ENCODE measurements at regions of chr18 and their contacts with region 1.

Region 1: GRCh38 chr18:2958819-2959298 is 54.1 kb downstream of the LPIN2 start:
- DNase-seq: no peak
- H3K4me3 Mint-ChIP-seq: peak overlapping the region; percentile 40
- H3K27ac Mint-ChIP-seq: peak overlapping the region; percentile 99
- H3K4me1 Mint-ChIP-seq: peaks cover 84% of the 10 kb centered on the region
- H3K27me3 Mint-ChIP-seq: no peaks in the 10 kb centered on the region

Region 2: DNA sequence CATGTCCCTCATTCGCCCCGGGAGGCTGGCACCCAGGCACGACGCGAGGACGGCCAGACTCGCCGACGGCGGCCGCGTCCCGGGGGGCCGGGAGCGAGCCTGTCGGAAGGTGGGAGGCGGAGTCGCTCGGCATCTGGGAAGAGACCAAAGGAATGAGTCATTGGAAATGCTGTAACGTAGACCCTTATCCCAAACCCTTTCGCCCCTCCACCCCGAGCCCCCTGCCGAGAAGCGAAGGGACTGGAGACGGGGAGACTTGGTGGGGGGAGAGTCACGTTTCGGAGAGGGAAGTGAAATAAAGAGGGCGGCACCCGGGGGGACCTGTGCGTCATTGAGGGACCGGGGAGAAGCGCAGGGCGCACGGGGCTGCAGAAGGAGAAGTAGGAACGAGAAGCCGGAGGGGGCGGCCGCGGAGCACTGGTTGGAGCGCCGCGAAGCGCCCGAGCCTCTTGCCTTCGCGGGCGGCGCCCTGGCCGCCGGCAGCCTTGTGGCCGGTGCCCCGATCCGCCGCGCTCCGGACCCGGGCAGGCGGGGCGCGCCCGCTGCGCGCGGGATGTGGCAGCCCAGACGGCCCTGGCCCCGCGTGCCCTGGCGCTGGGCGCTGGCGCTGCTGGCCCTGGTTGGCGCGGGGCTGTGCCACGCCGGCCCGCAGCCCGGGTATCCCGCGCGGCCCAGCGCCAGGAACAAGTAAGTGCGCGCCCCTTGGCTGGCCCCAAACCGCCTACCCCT is 112.1 kb before region 1 on chr18 and contains the start of gene EMILIN2:
- intact Hi-C with region 1: no loop called
- DNase-seq: peak; percentile 49
- H3K4me3 Mint-ChIP-seq: peak within 1 kb of the TSS; percentile 93
- H3K27ac Mint-ChIP-seq: peak within 1 kb of the TSS; percentile 95
- H3K4me1 Mint-ChIP-seq: peaks cover 36% of the 10 kb centered on the region
- H3K27me3 Mint-ChIP-seq: peaks cover 14% of the 10 kb centered on the region
- total RNA-seq, gene EMILIN2: 53.4 and 53.5 TPM in 2 replicates

Region 3: GRCh38 chr18:2932247-2933181 is 26.3 kb before region 1 on chr18:
- intact Hi-C with region 1: loop called (anchors 2 kb)
- DNase-seq: no peak
- H3K4me3 Mint-ChIP-seq: peak overlapping the region; percentile 43
- H3K27ac Mint-ChIP-seq: peak overlapping the region; percentile 89
- H3K4me1 Mint-ChIP-seq: peaks cover 32% of the 10 kb centered on the region
- H3K27me3 Mint-ChIP-seq: no peaks in the 10 kb centered on the region

Region 4: GRCh38 chr18:2948038-2948437 is 10.8 kb before region 1 on chr18:
- intact Hi-C with region 1: loop called (anchors 2 kb)
- DNase-seq: no peak
- H3K4me3 Mint-ChIP-seq: no peak overlapping the region
- H3K27ac Mint-ChIP-seq: no peak overlapping the region
- H3K4me1 Mint-ChIP-seq: peaks cover 44% of the 10 kb centered on the region
- H3K27me3 Mint-ChIP-seq: no peaks in the 10 kb centered on the region

Region 5: DNA sequence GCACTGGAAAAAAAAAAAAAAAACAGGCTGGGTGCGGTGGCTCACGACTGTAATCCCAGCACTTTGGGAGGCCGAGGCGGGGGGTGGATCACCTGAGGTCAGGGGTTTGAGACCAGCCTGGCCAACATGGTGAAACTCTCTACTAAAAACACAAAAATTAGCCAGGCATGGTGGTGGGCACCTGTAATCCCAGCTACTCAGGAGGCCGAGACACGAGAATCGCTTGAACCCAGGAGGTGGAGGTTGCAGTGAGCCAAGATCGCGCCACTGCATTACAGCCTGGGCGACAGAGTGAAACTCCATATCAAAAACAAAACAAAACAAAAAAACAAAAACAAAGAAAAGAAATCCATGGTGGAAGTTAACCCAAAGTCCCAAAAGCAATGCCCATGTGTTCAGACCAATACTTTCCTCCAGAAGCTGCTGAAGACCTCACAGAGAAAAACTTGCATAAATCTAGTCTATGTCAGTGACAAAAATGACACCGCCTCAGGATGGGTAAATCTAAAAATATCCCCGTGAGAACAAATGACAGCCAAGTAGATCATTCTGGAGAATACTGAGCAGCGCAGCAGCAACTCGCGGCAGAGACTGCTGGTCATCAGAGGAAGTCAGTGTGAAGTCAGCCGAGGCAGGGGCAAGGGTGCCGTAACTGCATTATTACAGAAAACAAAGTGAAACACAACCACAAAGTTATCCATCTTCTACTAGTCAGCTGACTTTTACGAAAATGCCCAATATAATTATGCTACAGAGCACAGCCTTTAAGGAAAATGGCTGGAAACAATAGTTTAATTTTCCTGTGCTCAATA is 13.1 kb after region 1 on chr18:
- intact Hi-C with region 1: loop called (anchors 1 kb)
- DNase-seq: peak; percentile 67
- H3K4me3 Mint-ChIP-seq: peak overlapping the region; percentile 89
- H3K27ac Mint-ChIP-seq: peak overlapping the region; percentile 98
- H3K4me1 Mint-ChIP-seq: peaks cover 81% of the 10 kb centered on the region
- H3K27me3 Mint-ChIP-seq: no peaks in the 10 kb centered on the region

Region 6: DNA sequence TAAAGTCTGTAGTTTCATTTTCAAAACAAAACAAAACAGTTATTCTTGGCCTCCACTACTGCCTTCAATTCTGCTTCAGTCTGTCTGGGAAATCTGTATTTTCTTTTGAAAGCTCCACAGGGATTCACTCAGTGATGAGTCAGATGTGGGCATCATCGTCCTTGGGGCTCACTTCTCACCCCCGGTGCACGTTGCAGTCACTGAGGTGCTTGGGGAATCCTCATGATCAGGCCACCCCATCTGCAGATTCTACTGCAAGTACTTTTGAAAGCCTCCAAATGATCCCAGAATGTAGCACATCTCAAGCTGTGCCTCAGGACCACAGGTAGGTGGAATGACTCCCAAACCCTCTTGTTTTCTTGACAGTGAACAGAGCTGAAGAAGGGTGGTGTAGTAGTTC is 19.8 kb after region 1 on chr18:
- intact Hi-C with region 1: loop called (anchors 1 kb)
- DNase-seq: no peak
- H3K4me3 Mint-ChIP-seq: peak overlapping the region; percentile 75
- H3K27ac Mint-ChIP-seq: peak overlapping the region; percentile 91
- H3K4me1 Mint-ChIP-seq: peaks cover 74% of the 10 kb centered on the region
- H3K27me3 Mint-ChIP-seq: no peaks in the 10 kb centered on the region

Region 7: GRCh38 chr18:3604498-3605408 is 645.9 kb after region 1 on chr18:
- intact Hi-C with region 1: loop called (anchors 5 kb)
- DNase-seq: no peak
- H3K4me3 Mint-ChIP-seq: no peak overlapping the region
- H3K27ac Mint-ChIP-seq: no peak overlapping the region
- H3K4me1 Mint-ChIP-seq: peaks cover 16% of the 10 kb centered on the region
- H3K27me3 Mint-ChIP-seq: no peaks in the 10 kb centered on the region

Measured in activated T-helper 2 cell treated with anti-CD3 and anti-CD28 coated beads, Interferon-gamma antibody, Interleukin-2, Interleukin-4, amounts not matched to agents 10 μg/mL and 5 μg/mL and 100 μg/mL, durations not matched to agents 14 hours and 24 hours and 36 hours (primary cell).